Sigmoid colon (tissue), 7 donors: ENCODE measurements at regions of chr10 and their contacts with region 1.

Region 1: GRCh38 chr10:14039968-14040671 is 290.6 kb downstream of the FRMD4A start:
- DNase-seq: no peak
- H3K4me3 ChIP-seq: no peak overlapping the region
- H3K27ac ChIP-seq: peak overlapping the region; percentile 47 to 58 (median 54)
- H3K4me1 ChIP-seq: peaks cover 0 to 12% (median 2%) of the 10 kb centered on the region in 4 donors
- H3K27me3 ChIP-seq: no peaks in the 10 kb centered on the region
- CTCF ChIP-seq: no peak
- EP300 ChIP-seq: no peak
- POLR2A ChIP-seq: no peak

Region 2: DNA sequence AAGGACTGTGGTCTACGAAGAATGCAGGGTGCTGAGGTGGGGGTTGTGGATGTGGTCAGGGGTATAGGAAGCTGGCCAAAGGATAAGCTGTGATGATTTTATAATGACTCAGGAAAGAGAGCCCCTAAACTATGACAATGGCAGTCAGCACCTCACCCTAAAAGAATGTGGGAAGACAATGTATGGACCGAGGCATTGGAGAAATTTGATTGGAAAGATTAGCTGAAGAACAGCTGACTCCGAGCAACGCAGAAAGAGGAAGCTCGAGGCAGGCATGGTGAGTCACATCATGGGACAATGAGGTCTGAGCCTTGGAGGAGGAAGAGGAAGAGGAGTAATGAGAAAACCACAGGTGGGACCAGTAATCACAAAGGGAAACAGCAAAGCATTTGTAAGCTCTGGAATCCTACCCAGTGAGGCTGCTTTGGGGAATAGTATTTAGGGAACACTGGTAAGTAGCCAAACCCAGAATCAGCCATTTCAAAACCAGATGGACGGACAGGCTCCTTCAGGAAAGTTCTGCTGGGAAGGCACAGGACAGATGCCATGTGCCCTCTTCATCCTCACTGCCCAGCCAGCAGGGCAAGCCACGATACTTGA is 157.9 kb before region 1 on chr10:
- intact Hi-C with region 1: no loop called
- DNase-seq: peak; percentile 69
- H3K4me3 ChIP-seq: no peak overlapping the region
- H3K27ac ChIP-seq: peak overlapping the region; percentile 9 to 56 (median 22)
- H3K4me1 ChIP-seq: peaks cover 0 to 20% (median 16%) of the 10 kb centered on the region in 4 donors
- H3K27me3 ChIP-seq: no peaks in the 10 kb centered on the region
- CTCF ChIP-seq: no peak
- EP300 ChIP-seq: no peak
- POLR2A ChIP-seq: no peak

Region 3: DNA sequence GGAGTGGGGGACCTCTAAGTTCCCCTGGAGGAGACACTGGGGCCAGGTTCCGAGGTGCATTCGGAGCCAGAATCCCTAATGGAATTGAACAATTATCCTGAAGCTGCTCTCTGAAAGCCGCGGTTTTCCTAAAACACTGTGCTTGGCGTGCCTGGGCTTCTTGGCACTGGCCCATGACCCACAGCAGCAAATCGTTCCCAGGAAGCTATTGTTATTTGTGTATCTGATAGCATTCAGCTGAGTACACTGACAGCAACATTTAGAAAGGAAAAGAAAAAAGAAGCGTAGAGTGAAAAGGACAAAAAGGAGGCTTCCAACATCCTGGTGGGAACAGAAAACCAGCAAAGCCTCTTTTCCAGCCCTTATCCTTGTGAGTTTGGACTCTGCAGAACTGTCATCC is 49.2 kb before region 1 on chr10:
- intact Hi-C with region 1: loop called (anchors 5 kb)
- DNase-seq: no peak
- H3K4me3 ChIP-seq: peak overlapping the region in 1 of 4 donors; percentile 1
- H3K27ac ChIP-seq: peak overlapping the region; percentile 53 to 74 (median 65)
- H3K4me1 ChIP-seq: peaks cover 0 to 28% (median 12%) of the 10 kb centered on the region in 4 donors
- H3K27me3 ChIP-seq: no peaks in the 10 kb centered on the region
- CTCF ChIP-seq: no peak
- EP300 ChIP-seq: no peak
- POLR2A ChIP-seq: no peak

Region 4: GRCh38 chr10:14093730-14094484 is 53.8 kb after region 1 on chr10:
- intact Hi-C with region 1: loop called (anchors 2 kb)
- DNase-seq: no peak
- H3K4me3 ChIP-seq: no peak overlapping the region
- H3K27ac ChIP-seq: no peak overlapping the region
- H3K4me1 ChIP-seq: no peaks in the 10 kb centered on the region
- H3K27me3 ChIP-seq: no peaks in the 10 kb centered on the region
- CTCF ChIP-seq: peak in 3 of 4 experiments; percentile 19 to 53 (median 25)
- EP300 ChIP-seq: no peak
- POLR2A ChIP-seq: no peak

Region 5: GRCh38 chr10:14225379-14226150 is 185.4 kb after region 1 on chr10:
- intact Hi-C with region 1: no loop called
- DNase-seq: no peak
- H3K4me3 ChIP-seq: no peak overlapping the region
- H3K27ac ChIP-seq: no peak overlapping the region
- H3K4me1 ChIP-seq: no peaks in the 10 kb centered on the region
- H3K27me3 ChIP-seq: no peaks in the 10 kb centered on the region
- CTCF ChIP-seq: no peak
- EP300 ChIP-seq: no peak
- POLR2A ChIP-seq: no peak